PC-9 (cell line): ENCODE measurements at regions of chr22 and their contacts with region 1.

Region 1: GRCh38 chr22:28855355-28856094 is 27.8 kb upstream of the ZNRF3 start:
- DNase-seq: peak; percentile 17 to 41
- H3K4me3 ChIP-seq: no peak overlapping the region
- H3K27ac ChIP-seq: no peak overlapping the region
- H3K4me1 ChIP-seq: no peaks in the 10 kb centered on the region
- H3K27me3 ChIP-seq: no peaks in the 10 kb centered on the region
- CTCF ChIP-seq: peak; percentile 97

Region 2: DNA sequence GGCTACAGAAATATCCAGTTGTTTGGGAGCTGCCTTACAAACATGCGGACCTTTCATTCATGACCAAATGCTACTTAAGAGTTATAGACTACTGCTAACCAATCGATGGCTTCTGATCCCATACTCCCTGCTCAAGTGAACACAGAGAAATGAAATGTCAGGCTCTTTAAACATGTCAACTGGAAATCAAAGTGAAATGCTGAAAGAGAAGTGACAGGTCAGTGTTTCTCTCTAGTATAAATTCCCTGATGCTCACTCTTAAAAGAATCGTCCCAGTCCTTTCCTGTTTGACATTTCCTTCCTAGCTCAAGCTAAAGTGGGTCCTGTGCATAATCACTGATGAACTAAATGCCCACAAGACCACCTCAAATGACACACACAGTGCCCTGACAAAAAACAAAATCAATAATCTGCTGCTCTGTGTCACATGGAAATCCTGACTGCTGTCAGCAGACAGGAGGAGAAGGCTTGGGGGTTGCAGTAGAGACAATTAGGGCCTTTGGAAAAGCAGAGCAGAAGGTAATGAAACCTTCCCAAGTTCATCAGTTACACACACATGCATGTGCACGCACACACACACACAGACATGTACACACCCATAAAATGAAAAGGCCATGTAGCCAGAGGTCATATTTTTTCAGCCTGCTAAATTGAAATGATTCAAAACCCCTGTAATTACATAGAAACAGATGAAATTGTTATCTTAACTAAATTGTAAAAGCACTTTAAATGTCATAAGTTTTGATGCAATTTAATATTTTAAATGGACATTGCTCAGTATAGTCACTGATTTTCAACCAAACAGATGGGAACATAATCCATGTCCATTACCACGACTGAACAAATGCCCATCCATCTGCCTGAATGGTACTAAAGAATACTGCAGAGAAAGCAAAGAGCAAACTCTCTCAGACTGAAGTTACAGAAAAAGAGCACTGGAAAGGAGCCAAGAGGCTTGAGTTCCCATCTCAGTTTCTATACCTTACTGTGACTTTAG is 506.6 kb before region 1 on chr22:
- CTCF ChIA-PET with region 1: interaction called, 16 read pairs
- POLR2A ChIA-PET with region 1: no interaction called
- intact Hi-C with region 1: no loop called
- DNase-seq: no peak
- H3K4me3 ChIP-seq: no peak overlapping the region
- H3K27ac ChIP-seq: no peak overlapping the region
- H3K4me1 ChIP-seq: no peaks in the 10 kb centered on the region
- H3K27me3 ChIP-seq: no peaks in the 10 kb centered on the region
- CTCF ChIP-seq: no peak

Region 3: DNA sequence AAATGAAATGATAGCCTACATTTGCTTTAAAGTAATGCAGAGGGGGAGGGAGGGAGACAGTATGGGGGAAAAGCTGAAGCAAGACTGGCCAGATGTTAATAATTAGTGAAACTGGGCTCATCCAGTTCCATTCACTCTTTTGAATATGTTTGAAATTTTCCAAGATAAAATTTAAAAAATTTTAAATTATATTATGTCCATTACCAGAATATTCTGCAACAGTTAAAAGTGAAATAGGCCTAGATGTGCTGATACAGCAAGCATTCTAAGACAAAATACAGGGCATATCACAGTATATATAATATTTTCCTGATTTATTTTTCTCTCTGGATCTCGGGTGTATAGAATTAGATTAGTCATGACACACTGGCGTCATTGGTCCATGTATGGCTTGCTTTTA is 14.2 kb after region 1 on chr22:
- CTCF ChIA-PET with region 1: no interaction called
- POLR2A ChIA-PET with region 1: no interaction called
- intact Hi-C with region 1: no loop called
- DNase-seq: no peak
- H3K4me3 ChIP-seq: no peak overlapping the region
- H3K27ac ChIP-seq: no peak overlapping the region
- H3K4me1 ChIP-seq: no peaks in the 10 kb centered on the region
- H3K27me3 ChIP-seq: no peaks in the 10 kb centered on the region
- CTCF ChIP-seq: no peak